ENCODE measurements at regions of chr3 and their contacts with region 1.

Region 1: GRCh38 chr3:135895106-135895733 is 70.3 kb upstream of the PPP2R3A start:
- DNase-seq: no peak
- ATAC-seq: peak; percentile 56

Region 2: DNA sequence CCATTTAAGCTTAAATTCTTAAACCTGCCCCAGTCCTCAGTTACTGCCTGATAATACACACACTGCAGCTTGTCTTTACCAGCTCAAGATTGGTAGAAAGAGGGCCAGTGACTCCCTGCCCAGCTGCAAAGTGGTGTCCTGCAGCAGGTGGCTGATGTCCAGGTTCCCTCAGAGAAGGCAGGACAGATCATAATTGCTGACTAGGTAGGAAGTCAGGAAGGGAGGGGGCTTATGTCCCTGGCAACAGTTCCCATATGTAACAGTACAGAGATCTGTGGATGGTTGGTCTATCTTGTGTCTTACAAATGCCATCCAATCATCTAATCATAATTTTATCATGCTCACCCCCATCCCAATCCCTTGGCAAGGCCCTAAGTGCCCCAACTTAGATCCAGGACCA is 421.8 kb before region 1 on chr3:
- intact Hi-C with region 1: no loop called
- DNase-seq: no peak
- ATAC-seq: peak; percentile 20

Region 3: GRCh38 chr3:135503760-135504686 is 391.2 kb before region 1 on chr3:
- intact Hi-C with region 1: loop called (anchors 10 kb)
- DNase-seq: peak; percentile 67
- ATAC-seq: peak; percentile 72